Activated B cell treated with CpG ODN at 0.5 μM for 24 hours (primary cell): ENCODE measurements at regions of chr12 and their contacts with region 1.

Region 1: GRCh38 chr12:77060136-77060882 is 5.1 kb downstream of the E2F7 start:
- DNase-seq: no peak
- ATAC-seq: peak; percentile 82
- H3K4me3 Mint-ChIP-seq: peak overlapping the region; percentile 25
- H3K27ac Mint-ChIP-seq: peak overlapping the region; percentile 69
- H3K4me1 Mint-ChIP-seq: peaks cover 42% of the 10 kb centered on the region
- H3K27me3 Mint-ChIP-seq: peaks cover 5% of the 10 kb centered on the region
- CTCF ChIP-seq: no peak

Region 2: DNA sequence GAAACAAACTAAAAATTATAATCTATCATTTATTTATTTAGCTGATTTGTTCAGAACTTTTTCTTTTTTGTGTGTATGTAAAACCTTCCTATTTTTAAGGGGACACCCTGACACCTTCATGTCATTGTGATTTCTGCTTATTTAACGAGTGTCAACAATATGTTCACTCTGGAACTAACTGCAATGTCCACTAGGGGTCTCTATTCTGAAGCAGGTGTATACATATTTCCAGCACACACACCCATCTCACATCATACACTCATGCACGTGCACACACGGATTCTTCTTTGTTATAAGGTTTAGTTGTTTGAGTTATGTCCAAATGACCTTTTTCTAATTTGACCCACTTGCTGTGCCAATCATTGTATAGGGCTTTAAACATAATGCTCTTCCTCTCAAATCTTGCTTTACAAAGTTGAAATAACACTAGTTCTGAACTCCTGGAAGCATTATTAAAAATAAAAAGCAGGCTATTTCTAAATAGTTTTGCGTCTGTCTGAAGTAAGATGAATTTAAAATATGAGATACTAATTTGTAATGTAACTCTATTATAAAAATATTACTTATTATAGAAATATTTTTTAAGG is 10.4 kb before region 1 on chr12:
- CTCF ChIA-PET with region 1: interaction called, 18 read pairs
- POLR2A ChIA-PET with region 1: no interaction called
- intact Hi-C with region 1: no loop called
- DNase-seq: no peak
- ATAC-seq: peak; percentile 80
- H3K4me3 Mint-ChIP-seq: no peak overlapping the region
- H3K27ac Mint-ChIP-seq: no peak overlapping the region
- H3K4me1 Mint-ChIP-seq: peaks cover 2% of the 10 kb centered on the region
- H3K27me3 Mint-ChIP-seq: no peaks in the 10 kb centered on the region
- CTCF ChIP-seq: no peak